ENCODE measurements at regions of chr5 and their contacts with region 1.

Region 1: DNA sequence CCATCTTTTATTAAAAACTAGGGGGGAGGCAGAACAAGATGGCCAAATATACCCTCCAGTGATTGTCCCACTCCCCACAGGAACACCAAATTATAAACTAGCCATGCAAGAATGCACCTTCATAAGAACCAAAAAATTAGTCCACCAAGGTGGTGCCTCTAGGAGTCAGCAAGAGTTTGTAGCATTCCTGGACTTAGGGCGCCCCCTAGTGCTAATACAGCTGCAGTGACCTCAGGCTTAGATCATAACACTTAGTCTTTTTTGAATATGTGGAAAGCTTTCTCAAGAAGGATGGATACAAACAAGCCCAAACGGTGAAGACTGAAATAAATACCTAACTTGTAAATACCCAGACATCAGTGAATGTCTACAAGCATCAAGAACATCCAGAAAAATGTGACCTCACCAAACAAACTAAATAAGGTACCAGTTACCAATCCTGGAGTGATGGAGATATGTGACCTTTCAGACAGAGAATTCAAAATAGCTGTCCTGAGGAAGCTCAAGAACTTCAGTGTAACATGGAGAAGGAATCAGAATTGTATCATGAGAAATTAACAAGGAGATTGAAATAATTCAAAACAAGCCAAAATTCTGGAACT is 19.3 kb downstream of the PPIP5K2 start:
- DNase-seq: peak in 4 of 5 donors; percentile 54 to 76 (median 72)
- ATAC-seq: peak; percentile 71 to 90 (median 87)
- H3K4me3 ChIP-seq: no peak overlapping the region
- H3K27ac ChIP-seq: no peak overlapping the region
- H3K4me1 ChIP-seq: no peaks in the 10 kb centered on the region
- H3K27me3 ChIP-seq: no peaks in the 10 kb centered on the region
- CTCF ChIP-seq: peak; percentile 76 to 95 (median 90)
- POLR2A ChIP-seq: no peak

Region 2: GRCh38 chr5:102536323-102536928 is 602.9 kb before region 1 on chr5:
- intact Hi-C with region 1: loop called in 1 of 10 experiments (anchors 5 kb)
- DNase-seq: no peak
- ATAC-seq: no peak
- H3K4me3 ChIP-seq: no peak overlapping the region
- H3K27ac ChIP-seq: no peak overlapping the region
- H3K4me1 ChIP-seq: peaks cover 0 to 23% (median 0%) of the 10 kb centered on the region in 12 donors
- H3K27me3 ChIP-seq: no peaks in the 10 kb centered on the region
- CTCF ChIP-seq: peak in 11 of 12 donors; percentile 15 to 55 (median 33)
- POLR2A ChIP-seq: no peak

Region 3: DNA sequence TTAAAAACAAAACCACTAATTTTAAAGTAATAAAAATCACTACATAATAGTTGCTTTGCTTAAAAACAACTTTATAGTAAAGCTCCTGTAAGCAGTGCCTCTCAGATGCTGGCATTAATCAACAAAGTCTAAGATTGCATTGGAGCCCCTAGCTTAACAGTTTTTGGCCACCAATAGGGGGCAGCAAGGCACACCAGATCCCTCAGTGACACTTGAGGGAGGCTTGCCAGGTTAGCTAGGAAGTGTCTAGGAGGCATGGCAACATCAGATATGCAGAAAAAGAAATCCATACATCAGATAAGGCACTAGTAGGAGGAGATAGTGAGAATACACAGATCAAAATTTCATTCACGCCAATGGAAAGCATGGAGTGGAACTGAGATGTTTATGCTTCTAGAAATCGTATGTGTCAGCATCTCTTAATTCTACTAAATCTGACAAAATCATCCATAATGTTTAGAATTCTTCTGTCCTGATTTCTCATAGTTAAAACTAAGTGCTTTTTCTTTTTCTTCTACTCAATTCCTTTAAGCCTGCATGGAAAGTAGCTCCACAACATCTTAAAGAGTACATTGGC is 457.9 kb before region 1 on chr5:
- intact Hi-C with region 1: loop called in 4 of 10 experiments (anchors 2 to 10 kb)
- DNase-seq: peak; percentile 62 to 75 (median 71)
- ATAC-seq: peak in 3 of 4 donors; percentile 84 to 88 (median 87)
- H3K4me3 ChIP-seq: no peak overlapping the region
- H3K27ac ChIP-seq: no peak overlapping the region
- H3K4me1 ChIP-seq: no peaks in the 10 kb centered on the region
- H3K27me3 ChIP-seq: no peaks in the 10 kb centered on the region
- CTCF ChIP-seq: peak; percentile 59 to 91 (median 82)
- POLR2A ChIP-seq: no peak

Region 4: DNA sequence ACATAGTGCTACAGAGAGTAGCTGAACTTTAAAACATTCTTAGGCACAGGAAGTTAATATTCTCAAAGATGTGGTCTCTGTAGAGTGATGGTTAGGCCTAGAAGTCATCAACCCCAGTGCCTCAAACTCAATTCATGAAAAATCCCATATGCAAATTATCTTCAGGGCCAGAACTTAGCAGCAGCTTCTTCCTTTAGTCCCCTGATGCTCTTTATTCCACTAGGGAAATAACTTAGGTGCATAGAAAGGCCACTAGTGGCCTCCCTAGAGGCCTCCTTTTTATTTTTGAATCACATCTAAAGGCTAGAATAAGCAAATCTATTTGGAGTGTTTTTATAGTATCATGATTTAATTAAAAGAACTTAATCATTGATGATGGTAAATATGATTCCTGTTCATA is 107.8 kb before region 1 on chr5:
- intact Hi-C with region 1: loop called in 1 of 10 experiments (anchors 10 kb)
- DNase-seq: no peak
- ATAC-seq: no peak
- H3K4me3 ChIP-seq: no peak overlapping the region
- H3K27ac ChIP-seq: no peak overlapping the region
- H3K4me1 ChIP-seq: peaks cover 0 to 5% (median 0%) of the 10 kb centered on the region in 12 donors
- H3K27me3 ChIP-seq: no peaks in the 10 kb centered on the region
- CTCF ChIP-seq: peak in 5 of 12 donors; percentile 16 to 39 (median 24)
- POLR2A ChIP-seq: no peak

Region 5: DNA sequence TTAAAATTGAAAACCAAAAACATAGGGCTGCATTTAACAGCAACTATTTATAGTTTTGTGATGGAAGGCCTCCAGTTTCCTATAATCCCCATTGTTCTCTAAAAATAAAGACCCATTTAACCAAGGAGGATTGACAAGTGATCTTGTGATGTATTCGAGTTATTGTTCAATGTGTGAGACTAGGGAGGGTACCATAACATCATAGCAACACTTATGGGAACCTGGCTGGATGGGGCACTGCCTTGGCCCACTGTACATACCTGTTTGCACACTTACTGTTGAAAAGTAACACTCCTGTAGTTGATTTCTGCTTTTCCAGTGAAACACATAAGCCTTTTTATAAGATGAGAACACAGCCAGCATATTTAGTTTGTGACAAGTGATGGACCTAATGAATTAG is 151.5 kb after region 1 on chr5:
- intact Hi-C with region 1: no loop called
- DNase-seq: no peak
- ATAC-seq: no peak
- H3K4me3 ChIP-seq: no peak overlapping the region
- H3K27ac ChIP-seq: no peak overlapping the region
- H3K4me1 ChIP-seq: peaks cover 0 to 10% (median 0%) of the 10 kb centered on the region in 12 donors
- H3K27me3 ChIP-seq: no peaks in the 10 kb centered on the region
- CTCF ChIP-seq: no peak
- POLR2A ChIP-seq: no peak